Naive thymus-derived CD8-positive, alpha-beta T cell (primary cell): ENCODE measurements at regions of chr7 and their contacts with region 1.

Region 1: GRCh38 chr7:157851501-157852067 is 514.8 kb downstream of the DNAJB6 start:
- DNase-seq: peak; percentile 50 to 85 (median 68)
- ATAC-seq: peak; percentile 99 to 100
- H3K4me3 Mint-ChIP-seq: peak overlapping the region; percentile 62 to 87 (median 80)
- H3K27ac Mint-ChIP-seq: peak overlapping the region; percentile 72 to 100 (median 96)
- H3K4me1 Mint-ChIP-seq: peaks cover 7 to 30% (median 10%) of the 10 kb centered on the region in 4 donors
- H3K27me3 Mint-ChIP-seq: no peaks in the 10 kb centered on the region

Region 2: DNA sequence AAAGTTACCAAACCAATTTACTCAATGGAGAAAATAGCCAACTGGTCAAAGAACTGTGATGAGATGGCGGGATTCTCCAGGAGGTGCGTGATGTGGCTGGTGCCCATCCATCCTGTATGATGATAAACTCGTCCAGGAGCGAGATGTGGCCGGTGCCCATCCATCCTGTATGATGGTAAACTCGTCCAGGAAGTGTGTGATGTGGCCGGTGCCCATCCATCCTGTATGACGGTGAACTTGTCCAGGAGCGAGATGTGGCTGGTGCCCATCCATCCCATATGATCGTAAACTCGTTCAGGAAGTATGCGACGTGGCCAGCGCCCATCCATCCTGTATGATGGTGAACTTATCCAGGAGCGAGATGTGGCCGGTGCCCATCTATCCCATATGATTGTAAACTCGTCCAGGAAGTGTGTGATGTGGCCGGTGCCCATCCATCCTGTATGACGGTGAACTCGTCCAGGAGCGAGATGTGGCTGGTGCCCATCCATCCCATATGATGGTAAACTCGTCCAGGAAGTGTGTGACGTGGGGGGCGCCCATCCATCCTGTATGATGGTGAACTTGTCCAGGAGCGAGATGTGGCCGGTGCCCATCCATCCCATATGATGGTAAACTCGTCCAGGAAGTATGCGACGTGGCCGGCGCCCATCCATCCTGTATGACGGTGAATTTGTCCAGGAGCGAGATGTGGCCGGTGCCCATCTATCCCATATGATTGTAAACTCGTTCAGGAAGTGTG is 18.5 kb before region 1 on chr7:
- POLR2A ChIA-PET with region 1: no interaction called
- DNase-seq: no peak
- ATAC-seq: no peak
- H3K4me3 Mint-ChIP-seq: no peak overlapping the region
- H3K27ac Mint-ChIP-seq: no peak overlapping the region
- H3K4me1 Mint-ChIP-seq: peaks cover 4 to 8% (median 4%) of the 10 kb centered on the region in 4 donors
- H3K27me3 Mint-ChIP-seq: peaks cover 0 to 4% (median 1%) of the 10 kb centered on the region in 5 donors

Region 3: GRCh38 chr7:157871681-157872080 is 20.1 kb after region 1 on chr7:
- POLR2A ChIA-PET with region 1: interaction called, 11 read pairs
- DNase-seq: peak in 1 of 10 donors; percentile 34
- ATAC-seq: peak in 1 of 2 donors; percentile 48
- H3K4me3 Mint-ChIP-seq: peak overlapping the region in 4 of 10 donors; percentile 9 to 35 (median 20)
- H3K27ac Mint-ChIP-seq: peak overlapping the region in 8 of 10 donors; percentile 5 to 77 (median 36)
- H3K4me1 Mint-ChIP-seq: peaks cover 18 to 44% (median 31%) of the 10 kb centered on the region in 4 donors
- H3K27me3 Mint-ChIP-seq: no peaks in the 10 kb centered on the region

Region 4: GRCh38 chr7:158016180-158017097 is 164.9 kb after region 1 on chr7:
- POLR2A ChIA-PET with region 1: no interaction called
- DNase-seq: no peak
- ATAC-seq: no peak
- H3K4me3 Mint-ChIP-seq: no peak overlapping the region
- H3K27ac Mint-ChIP-seq: no peak overlapping the region
- H3K4me1 Mint-ChIP-seq: peaks cover 0 to 3% (median under 1%) of the 10 kb centered on the region in 4 donors
- H3K27me3 Mint-ChIP-seq: peaks cover 0 to 9% (median 0%) of the 10 kb centered on the region in 5 donors